Activated CD4-positive, alpha-beta memory T cell treated with anti-CD3 and anti-CD28 coated beads for 36 hours (primary cell): ENCODE measurements at regions of chr5 and their contacts with region 1.

Region 1: GRCh38 chr5:87780831-87781760 is 368.4 kb upstream of the CCNH start:
- DNase-seq: peak; percentile 82
- H3K4me3 Mint-ChIP-seq: no peak overlapping the region
- H3K27ac Mint-ChIP-seq: no peak overlapping the region
- H3K4me1 Mint-ChIP-seq: no peaks in the 10 kb centered on the region
- H3K27me3 Mint-ChIP-seq: peaks cover 18% of the 10 kb centered on the region

Region 2: DNA sequence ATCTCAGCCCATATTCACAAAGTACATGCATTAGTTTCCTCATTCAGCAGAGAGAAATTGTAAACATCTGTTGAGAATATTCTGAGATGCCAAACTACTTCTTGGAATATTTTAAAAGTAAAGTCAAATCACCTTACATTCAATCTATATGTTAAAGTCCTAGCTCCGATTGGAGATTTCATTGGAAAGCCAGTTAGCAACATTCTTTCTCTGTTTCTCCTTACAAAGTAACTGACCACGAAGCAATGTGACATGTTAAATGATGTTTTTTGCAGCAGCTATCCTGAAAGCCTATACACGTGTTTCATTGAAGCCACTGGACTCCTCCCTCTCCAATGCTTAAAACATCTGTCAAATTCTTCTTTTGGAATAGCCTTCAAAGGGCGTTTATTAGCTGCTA is 10.8 kb after region 1 on chr5:
- CTCF ChIA-PET with region 1: interaction called, 12 read pairs
- POLR2A ChIA-PET with region 1: no interaction called
- intact Hi-C with region 1: no loop called
- DNase-seq: no peak
- H3K4me3 Mint-ChIP-seq: no peak overlapping the region
- H3K27ac Mint-ChIP-seq: no peak overlapping the region
- H3K4me1 Mint-ChIP-seq: no peaks in the 10 kb centered on the region
- H3K27me3 Mint-ChIP-seq: peaks cover 8% of the 10 kb centered on the region

Region 3: DNA sequence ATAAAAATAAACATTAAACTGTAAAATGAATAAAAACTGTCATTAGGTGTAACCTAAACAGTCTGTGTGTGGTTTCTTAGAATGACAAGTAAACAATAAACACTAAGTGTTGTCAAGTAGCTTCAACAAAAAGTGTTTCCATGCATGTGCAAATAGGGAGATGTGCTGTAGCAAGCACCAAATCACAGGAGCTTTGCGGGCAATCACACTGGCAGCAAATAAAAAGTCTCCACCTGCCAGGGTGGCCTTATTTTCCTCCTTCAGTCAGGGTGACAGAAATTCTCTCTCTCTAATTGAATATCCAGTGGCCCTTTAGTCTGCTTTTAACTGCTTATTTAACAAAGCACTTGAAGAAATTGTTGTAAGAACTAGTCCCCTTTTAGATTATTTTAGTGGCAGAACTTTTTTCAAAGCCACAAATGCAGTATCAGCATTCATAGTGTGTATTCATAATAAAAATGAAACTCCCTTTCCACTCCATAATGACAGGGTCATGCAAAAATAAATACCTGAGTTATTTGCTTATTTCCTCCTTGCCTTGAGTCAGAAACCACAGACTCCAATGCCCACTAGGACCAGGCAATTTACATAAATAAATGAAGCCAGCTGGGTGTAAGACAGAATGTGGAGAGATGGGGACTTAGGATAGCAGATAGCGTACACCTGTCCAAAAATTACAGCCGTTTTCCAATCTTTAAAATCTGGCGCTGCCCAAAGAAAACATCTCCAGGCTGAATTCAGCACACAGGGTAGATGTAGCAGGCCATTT is 69.6 kb after region 1 on chr5:
- CTCF ChIA-PET with region 1: no interaction called
- POLR2A ChIA-PET with region 1: no interaction called
- intact Hi-C with region 1: no loop called
- DNase-seq: no peak
- H3K4me3 Mint-ChIP-seq: no peak overlapping the region
- H3K27ac Mint-ChIP-seq: no peak overlapping the region
- H3K4me1 Mint-ChIP-seq: no peaks in the 10 kb centered on the region
- H3K27me3 Mint-ChIP-seq: no peaks in the 10 kb centered on the region

Region 4: GRCh38 chr5:88660947-88661805 is 880.1 kb after region 1 on chr5:
- CTCF ChIA-PET with region 1: interaction called, 11 read pairs
- POLR2A ChIA-PET with region 1: no interaction called
- intact Hi-C with region 1: no loop called
- DNase-seq: peak; percentile 54
- H3K4me3 Mint-ChIP-seq: peak overlapping the region; percentile 49
- H3K27ac Mint-ChIP-seq: no peak overlapping the region
- H3K4me1 Mint-ChIP-seq: peaks cover 21% of the 10 kb centered on the region
- H3K27me3 Mint-ChIP-seq: peaks cover 64% of the 10 kb centered on the region

Region 5: GRCh38 chr5:88724201-88724600 is 943.1 kb after region 1 on chr5:
- CTCF ChIA-PET with region 1: interaction called, 37 read pairs
- POLR2A ChIA-PET with region 1: no interaction called
- intact Hi-C with region 1: loop called (anchors 1 kb)
- DNase-seq: no peak
- H3K4me3 Mint-ChIP-seq: no peak overlapping the region
- H3K27ac Mint-ChIP-seq: no peak overlapping the region
- H3K4me1 Mint-ChIP-seq: no peaks in the 10 kb centered on the region
- H3K27me3 Mint-ChIP-seq: peaks cover 23% of the 10 kb centered on the region